ENCODE measurements at regions of chr14 and their contacts with region 1.

Region 1: GRCh38 chr14:69535230-69535848 is 39.3 kb downstream of the CCDC177 start:
- DNase-seq: peak; percentile 75
- ATAC-seq: peak; percentile 98
- H3K4me3 Mint-ChIP-seq: no peak overlapping the region
- H3K27ac Mint-ChIP-seq: no peak overlapping the region
- H3K4me1 Mint-ChIP-seq: 0 out of 2 replicates have a peak, but pooled peaks cover 7% of the 10 kb centered on the region
- H3K27me3 Mint-ChIP-seq: 0 out of 2 replicates have a peak, but pooled peaks cover 3% of the 10 kb centered on the region
- CTCF ChIP-seq: peak; percentile 29

Region 2: DNA sequence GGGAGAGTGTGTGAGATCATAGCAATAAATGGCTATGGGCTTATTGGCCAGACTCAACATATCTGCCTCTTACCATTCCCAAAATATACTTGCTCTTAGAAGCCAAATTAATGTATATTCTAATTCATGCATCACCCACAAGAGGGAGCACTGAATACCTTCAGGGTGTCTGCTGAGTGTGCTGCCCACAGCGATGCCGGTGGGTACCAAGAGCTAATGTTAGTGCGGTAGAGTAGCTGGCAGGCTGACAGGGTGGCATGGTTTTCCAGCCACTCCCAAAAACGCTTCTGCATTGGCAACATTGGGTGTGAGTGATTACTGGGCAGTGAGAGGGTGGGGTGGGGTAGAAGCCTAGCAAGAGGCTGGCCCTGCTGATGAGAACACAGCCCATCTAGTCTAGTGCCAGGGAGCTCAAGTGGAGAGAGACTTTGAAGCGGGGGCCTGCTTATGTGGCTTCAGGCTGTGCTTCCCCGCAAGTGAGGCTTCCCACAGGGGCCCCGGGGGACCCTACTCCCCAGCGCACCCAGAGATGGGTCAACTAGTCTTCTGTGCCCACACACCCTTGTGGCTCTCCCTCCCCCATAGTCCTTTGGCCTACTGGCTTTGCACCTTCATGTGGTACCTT is 60.0 kb before region 1 on chr14:
- CTCF ChIA-PET with region 1: interaction called, 14 read pairs
- POLR2A ChIA-PET with region 1: no interaction called
- DNase-seq: no peak
- ATAC-seq: peak; percentile 78
- H3K4me3 Mint-ChIP-seq: no peak overlapping the region
- H3K27ac Mint-ChIP-seq: no peak overlapping the region
- H3K4me1 Mint-ChIP-seq: no peaks in the 10 kb centered on the region
- H3K27me3 Mint-ChIP-seq: peaks cover 3% of the 10 kb centered on the region
- CTCF ChIP-seq: no peak; the same call in 1 of the 2 replicates

Region 3: DNA sequence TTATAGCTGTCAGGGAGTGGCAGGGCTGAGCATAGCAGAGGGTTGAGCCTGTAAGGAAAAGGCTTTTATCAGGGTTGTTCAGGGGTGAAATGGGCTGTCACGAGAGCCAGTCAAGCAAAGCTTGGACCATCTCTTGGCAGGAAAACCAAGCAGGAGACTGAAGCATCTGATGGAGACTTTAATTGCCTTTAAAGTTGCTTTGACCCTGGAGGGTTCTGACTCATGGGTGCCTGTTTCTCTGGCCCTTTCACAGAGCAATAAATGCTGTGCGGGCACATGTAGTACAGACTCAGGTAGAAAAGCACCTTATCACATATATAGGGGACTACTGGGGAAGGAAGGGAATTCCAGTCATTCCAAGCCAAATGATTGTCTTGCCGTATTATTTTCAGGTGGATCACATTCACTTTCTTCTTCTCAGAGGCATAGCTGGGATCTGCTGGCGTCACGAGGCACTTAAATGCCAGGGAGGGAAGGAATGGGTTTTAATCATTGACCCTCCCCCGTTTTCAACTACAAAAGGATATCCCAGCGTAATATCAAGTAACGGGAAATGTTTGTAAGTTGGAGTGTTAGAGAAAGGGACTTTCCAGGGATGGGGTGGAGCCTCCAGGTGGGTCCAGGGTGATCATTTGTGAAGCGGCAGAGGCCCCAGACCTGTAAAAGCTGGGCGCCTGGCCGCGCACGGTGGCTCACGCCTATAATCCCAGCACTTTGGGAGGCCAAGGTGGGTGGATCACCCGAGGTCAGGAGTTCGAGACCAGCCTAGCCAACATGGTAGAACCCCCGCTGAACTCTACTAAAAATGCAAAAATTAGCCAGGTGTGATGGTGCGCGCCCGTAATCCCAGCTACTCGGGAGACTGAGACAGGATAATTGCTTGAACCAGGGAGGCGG is 15.9 kb before region 1 on chr14:
- CTCF ChIA-PET with region 1: interaction called, 32 read pairs
- POLR2A ChIA-PET with region 1: no interaction called
- DNase-seq: no peak
- ATAC-seq: peak; percentile 20; the same call in 1 of the 2 replicates
- H3K4me3 Mint-ChIP-seq: no peak overlapping the region
- H3K27ac Mint-ChIP-seq: 0 out of 2 replicates have a peak overlapping the region, but pooled peaks have one; percentile 4
- H3K4me1 Mint-ChIP-seq: peaks cover 23% of the 10 kb centered on the region
- H3K27me3 Mint-ChIP-seq: no peaks in the 10 kb centered on the region
- CTCF ChIP-seq: no peak

Region 4: GRCh38 chr14:69553221-69553620 is 17.9 kb after region 1 on chr14:
- CTCF ChIA-PET with region 1: interaction called, 44 read pairs
- POLR2A ChIA-PET with region 1: interaction called, 3 read pairs
- DNase-seq: no peak
- ATAC-seq: no peak
- H3K4me3 Mint-ChIP-seq: no peak overlapping the region
- H3K27ac Mint-ChIP-seq: no peak overlapping the region
- H3K4me1 Mint-ChIP-seq: peaks cover 20% of the 10 kb centered on the region
- H3K27me3 Mint-ChIP-seq: no peaks in the 10 kb centered on the region
- CTCF ChIP-seq: no peak

Measured in WTC11 (cell line).